ENCODE measurements at regions of chr1 and their contacts with region 1.

Region 1: DNA sequence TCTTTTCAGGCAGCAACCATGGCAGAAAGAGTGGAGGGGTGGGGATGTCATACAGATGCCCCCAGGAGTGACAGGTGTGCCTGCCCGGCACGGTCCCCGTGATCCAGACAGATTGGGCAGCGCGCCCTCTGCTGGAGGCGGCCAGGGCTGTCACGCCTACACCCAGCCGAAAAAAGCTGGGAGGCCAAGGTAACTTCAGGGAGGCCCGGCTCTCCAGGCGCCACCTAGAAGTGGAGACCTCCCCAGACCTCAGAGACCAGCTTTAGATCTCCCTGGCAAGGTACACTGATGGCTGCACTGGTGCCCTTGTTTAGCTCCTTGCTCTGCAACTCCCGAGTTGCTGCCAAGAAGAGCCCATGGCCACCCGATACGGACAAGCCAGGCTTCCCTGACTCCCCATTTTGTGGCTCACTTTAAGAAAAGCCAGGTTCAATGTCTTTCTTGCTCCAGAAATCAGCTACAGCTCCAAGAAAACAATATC is 6.6 kb downstream of the GOLT1A start:
- DNase-seq: no peak
- H3K4me3 ChIP-seq: no peak overlapping the region
- H3K27me3 ChIP-seq: no peaks in the 10 kb centered on the region
- CTCF ChIP-seq: peak; percentile 98

Region 2: GRCh38 chr1:203861379-203862184 is 345.6 kb before region 1 on chr1 and contains the start of gene SNRPE:
- CTCF ChIA-PET with region 1: interaction called, 17 read pairs
- POLR2A ChIA-PET with region 1: no interaction called
- DNase-seq: peak; percentile 88
- H3K4me3 ChIP-seq: peak within 1 kb of the TSS; percentile 64
- H3K27me3 ChIP-seq: no peaks in the 10 kb centered on the region
- CTCF ChIP-seq: peak; percentile 97
- polyA plus RNA-seq, gene SNRPE: 128 and 147 TPM in 2 replicates

Region 3: GRCh38 chr1:204171751-204172178 is 35.4 kb before region 1 on chr1:
- CTCF ChIA-PET with region 1: interaction called, 240 read pairs
- POLR2A ChIA-PET with region 1: no interaction called
- DNase-seq: peak; percentile 59
- H3K4me3 ChIP-seq: no peak overlapping the region
- H3K27me3 ChIP-seq: no peaks in the 10 kb centered on the region
- CTCF ChIP-seq: no peak

Region 4: GRCh38 chr1:204190212-204191211 is 16.7 kb before region 1 on chr1:
- CTCF ChIA-PET with region 1: interaction called, 46 read pairs
- POLR2A ChIA-PET with region 1: interaction called, 3 read pairs
- DNase-seq: peak; percentile 13
- H3K4me3 ChIP-seq: 0 out of 2 replicates have a peak overlapping the region, but pooled peaks have one; percentile 5
- H3K27me3 ChIP-seq: peaks cover 1% of the 10 kb centered on the region; the same call in 1 of the 2 replicates
- CTCF ChIP-seq: no peak

Region 5: GRCh38 chr1:204257954-204258752 is 51.0 kb after region 1 on chr1:
- CTCF ChIA-PET with region 1: interaction called, 13 read pairs
- POLR2A ChIA-PET with region 1: no interaction called
- DNase-seq: no peak
- H3K4me3 ChIP-seq: no peak overlapping the region
- H3K27me3 ChIP-seq: no peaks in the 10 kb centered on the region
- CTCF ChIP-seq: peak; percentile 87

Region 6: DNA sequence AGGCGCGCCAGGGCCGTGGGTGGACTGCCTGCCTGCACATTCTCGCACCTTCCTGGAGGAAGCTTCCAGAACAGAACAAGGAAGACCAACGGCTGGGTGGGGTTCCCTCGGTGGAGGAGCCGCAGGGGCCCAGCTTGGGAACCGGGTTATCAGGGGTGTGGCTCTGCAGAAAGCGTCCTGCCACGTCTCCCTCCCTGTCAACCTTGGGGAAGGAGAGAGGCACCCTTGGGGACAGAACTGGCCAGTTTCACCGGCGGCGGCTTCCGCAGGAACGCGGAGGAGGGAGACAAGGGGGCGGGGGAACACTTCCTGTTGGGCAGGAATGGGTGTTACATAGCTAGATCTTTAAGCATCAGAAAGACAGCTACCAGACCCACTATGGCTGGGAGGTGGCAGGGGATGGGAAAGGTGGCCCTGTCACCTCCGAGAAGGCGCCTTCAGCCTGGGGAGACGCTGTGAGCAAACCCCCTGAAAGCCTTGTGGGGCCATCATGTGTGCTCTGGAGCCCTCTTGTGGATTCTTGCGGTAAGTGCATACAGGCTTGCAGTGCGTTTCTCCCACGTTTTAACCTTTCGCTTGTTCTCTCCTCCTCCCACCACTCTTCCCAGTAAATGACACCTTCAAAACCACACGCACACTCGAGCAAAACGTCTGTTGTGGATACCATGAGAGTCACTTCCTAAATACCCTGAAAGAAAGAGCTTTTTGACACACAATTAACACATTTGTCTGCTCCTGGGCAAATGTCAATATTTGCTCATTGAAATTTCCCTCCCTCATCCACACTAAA is 156.4 kb after region 1 on chr1:
- CTCF ChIA-PET with region 1: interaction called, 81 read pairs
- POLR2A ChIA-PET with region 1: no interaction called
- DNase-seq: no peak
- H3K4me3 ChIP-seq: peak overlapping the region; percentile 27
- H3K27me3 ChIP-seq: no peaks in the 10 kb centered on the region
- CTCF ChIP-seq: peak; percentile 89

Measured in BJ (cell line).